A549 (cell line): ENCODE measurements at regions of chr19 and their contacts with region 1.

Region 1: DNA sequence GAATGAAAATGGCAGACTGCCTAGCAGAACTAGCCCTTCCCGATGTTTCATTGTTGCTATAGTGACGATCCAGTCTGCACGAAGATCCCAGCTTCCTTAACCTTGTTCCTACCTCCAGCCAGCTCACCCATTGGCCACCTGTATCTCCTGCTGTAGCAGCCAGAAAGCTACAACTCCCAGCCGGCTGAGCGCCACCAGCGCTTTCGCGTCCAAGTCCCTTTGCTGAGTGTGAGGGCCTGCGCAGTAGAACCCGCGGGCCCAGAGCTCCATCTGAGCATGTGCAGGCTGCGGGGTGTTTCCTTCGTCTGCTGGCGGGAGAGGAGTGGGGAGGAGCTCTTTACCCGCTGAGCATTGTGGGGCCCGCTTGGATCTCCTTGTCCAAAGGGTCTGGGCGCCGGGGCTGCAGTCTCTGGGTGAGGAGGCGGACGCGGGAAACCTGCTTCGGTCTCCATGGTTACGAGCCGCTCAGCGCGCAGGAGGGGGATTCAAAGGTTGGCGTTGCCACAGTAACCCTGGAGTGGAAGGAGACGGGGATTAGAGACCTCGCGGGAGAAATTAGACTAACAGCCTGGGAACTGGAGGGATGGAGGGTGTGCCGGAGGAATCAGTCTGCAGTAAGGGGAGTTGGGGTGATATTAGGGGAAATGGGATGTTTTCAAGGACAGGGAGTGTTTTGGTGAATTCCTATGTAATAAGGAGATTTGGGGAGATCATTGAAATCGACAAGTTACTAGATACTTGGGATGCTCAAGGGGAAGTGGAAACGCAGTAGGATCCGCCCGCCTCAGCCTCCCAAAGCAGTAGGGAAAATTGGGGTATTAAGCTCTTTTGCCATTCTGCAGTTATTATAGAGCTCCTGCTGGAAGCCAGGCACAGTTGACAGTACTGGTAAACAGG is 33.5 kb downstream of the ZSWIM9 start:
- DNase-seq: peak; percentile 98 to 99
- ATAC-seq: peak; percentile 99
- H3K4me3 ChIP-seq: peak overlapping the region; percentile 71
- H3K27ac ChIP-seq: peak overlapping the region; percentile 85 to 90
- H3K4me1 ChIP-seq: peaks cover 9% of the 10 kb centered on the region; the same call in 2 of the 3 replicates
- CTCF ChIP-seq: no peak
- EP300 ChIP-seq: no peak
- POLR2A ChIP-seq: peak; percentile 81
- RAD21 ChIP-seq: no peak

Region 2: DNA sequence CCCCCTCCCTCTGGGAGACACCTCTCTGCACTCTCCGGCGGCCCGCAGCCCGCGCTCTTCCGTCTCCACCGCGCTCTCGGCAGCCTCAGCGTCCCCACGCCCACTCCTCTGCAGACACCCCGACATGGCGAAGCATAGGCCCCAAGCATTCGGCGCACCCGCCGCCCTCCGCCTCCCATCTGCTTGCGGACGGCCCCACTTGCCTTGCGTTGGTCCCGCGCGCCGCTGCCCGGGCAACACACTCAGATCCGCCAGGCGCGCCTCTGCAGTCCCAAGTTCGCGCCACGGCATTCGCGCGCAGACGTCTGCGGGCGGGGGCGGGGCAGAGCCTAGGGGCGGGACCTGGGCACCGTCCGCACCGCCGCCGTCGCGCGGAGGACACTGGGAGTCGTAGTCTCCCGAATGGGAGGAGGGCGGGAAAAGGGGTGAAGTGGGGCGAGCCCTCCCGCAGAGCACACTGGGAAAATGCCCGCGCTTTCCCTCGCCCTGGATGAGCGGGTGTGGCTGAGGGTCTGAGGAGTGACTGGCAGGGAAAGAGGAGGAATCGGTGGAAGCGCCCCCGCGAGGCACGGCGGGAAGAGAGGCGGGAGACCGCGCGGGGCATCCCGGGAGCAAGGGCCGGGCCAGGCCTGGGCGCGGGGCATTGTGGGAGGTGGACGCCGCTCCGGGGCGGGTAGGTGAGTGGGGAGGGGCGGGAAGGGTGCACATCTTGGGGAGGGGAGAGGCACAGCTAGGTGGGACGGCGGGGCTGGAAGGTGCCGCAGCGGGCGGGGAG is 33.8 kb before region 1 on chr19 and contains the starts of genes LIG1 and ZSWIM9:
- CTCF ChIA-PET with region 1: no interaction called
- POLR2A ChIA-PET with region 1: interaction called, 17 read pairs
- DNase-seq: peak; percentile 97 to 99
- ATAC-seq: peak; percentile 88 to 94
- H3K4me3 ChIP-seq: peak within 1 kb of the TSS; percentile 94
- H3K27ac ChIP-seq: peak within 1 kb of the TSS; percentile 92 to 93
- H3K4me1 ChIP-seq: peaks cover 14% of the 10 kb centered on the region; the same call in 2 of the 3 replicates
- CTCF ChIP-seq: no peak
- EP300 ChIP-seq: no peak
- POLR2A ChIP-seq: peak; percentile 80
- RAD21 ChIP-seq: no peak
- polyA plus RNA-seq, gene LIG1: 41.2 and 54.9 TPM in 2 replicates
- polyA plus RNA-seq, gene ZSWIM9: 0.97 and 1.2 TPM in 2 replicates

Region 3: GRCh38 chr19:48190288-48190884 is 13.6 kb before region 1 on chr19:
- CTCF ChIA-PET with region 1: interaction called, 24 read pairs
- POLR2A ChIA-PET with region 1: interaction called, 13 read pairs
- DNase-seq: peak in 1 of 2 experiments; percentile 64
- ATAC-seq: peak in 1 of 2 experiments; percentile 30; a peak in 3 of 6 replicates
- H3K4me3 ChIP-seq: no peak overlapping the region
- H3K27ac ChIP-seq: no peak overlapping the region
- H3K4me1 ChIP-seq: 0 out of 3 replicates have a peak, but pooled peaks cover 4% of the 10 kb centered on the region
- CTCF ChIP-seq: no peak
- EP300 ChIP-seq: no peak
- POLR2A ChIP-seq: no peak
- RAD21 ChIP-seq: no peak

Region 4: GRCh38 chr19:48466561-48467335 is 262.8 kb after region 1 on chr19:
- CTCF ChIA-PET with region 1: no interaction called
- POLR2A ChIA-PET with region 1: no interaction called
- DNase-seq: no peak
- ATAC-seq: no peak
- H3K4me3 ChIP-seq: no peak overlapping the region
- H3K27ac ChIP-seq: no peak overlapping the region; a peak in 1 of 6 replicates
- H3K4me1 ChIP-seq: peaks cover 24% of the 10 kb centered on the region
- CTCF ChIP-seq: no peak
- EP300 ChIP-seq: no peak
- POLR2A ChIP-seq: no peak
- RAD21 ChIP-seq: no peak